Astrocyte of the cerebellum (primary cell): ENCODE measurements at regions of chr14 and their contacts with region 1.

Region 1: GRCh38 chr14:67571272-67571850 is 28.7 kb downstream of the PIGH start:
- DNase-seq: peak; percentile 19
- H3K4me3 ChIP-seq: no peak overlapping the region
- CTCF ChIP-seq: peak; percentile 95

Region 2: DNA sequence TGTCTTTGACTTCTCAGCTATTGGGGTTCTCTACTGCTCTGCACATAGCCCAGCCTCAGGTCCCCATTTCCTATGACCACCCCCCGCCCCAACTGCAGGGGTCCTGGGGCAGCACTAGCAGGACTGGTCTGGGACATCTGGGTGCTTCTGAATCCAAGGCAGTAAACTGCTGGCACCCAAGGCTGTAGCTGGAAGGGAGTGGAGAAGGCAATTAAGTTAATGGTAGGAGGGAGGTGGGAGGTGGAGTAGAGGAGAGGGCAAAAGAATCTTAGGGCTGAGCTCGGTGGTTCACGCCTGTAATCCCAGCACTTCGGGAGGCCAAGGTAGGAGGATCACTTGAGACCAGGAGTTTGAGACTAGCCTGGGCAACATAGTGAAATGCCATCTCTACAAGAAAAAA is 170.9 kb before region 1 on chr14:
- in situ Hi-C with region 1: no loop called
- DNase-seq: no peak
- H3K4me3 ChIP-seq: no peak overlapping the region
- CTCF ChIP-seq: no peak

Region 3: GRCh38 chr14:67429501-67430212 is 141.7 kb before region 1 on chr14:
- in situ Hi-C with region 1: loop called (anchors 5 kb)
- DNase-seq: no peak
- H3K4me3 ChIP-seq: no peak overlapping the region
- CTCF ChIP-seq: no peak

Region 4: DNA sequence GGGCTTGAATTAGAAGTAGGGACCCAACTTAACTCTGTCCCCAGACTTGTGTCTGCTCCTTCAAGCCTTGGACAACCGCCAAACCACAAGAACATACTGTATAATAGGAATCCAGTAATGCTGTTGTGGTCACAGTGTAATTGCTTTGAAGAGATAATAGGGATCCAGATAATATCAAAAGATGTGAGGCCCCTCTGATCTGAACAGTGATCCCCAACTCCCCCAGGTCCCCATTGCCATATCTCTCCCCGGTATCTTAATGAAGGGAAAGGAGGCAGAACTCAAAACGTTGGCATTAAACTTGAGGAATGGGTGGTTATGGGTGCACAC is 46.8 kb before region 1 on chr14:
- in situ Hi-C with region 1: loop called (anchors 5 kb)
- DNase-seq: no peak
- H3K4me3 ChIP-seq: no peak overlapping the region
- CTCF ChIP-seq: no peak